ENCODE measurements at regions of chr1 and their contacts with region 1.

Region 1: GRCh38 chr1:173297798-173298391 is 90.8 kb upstream of the TNFSF4 start:
- DNase-seq: peak; percentile 15
- H3K4me3 Mint-ChIP-seq: peak overlapping the region; percentile 16
- H3K27ac Mint-ChIP-seq: peak overlapping the region; percentile 37
- H3K4me1 Mint-ChIP-seq: peaks cover 24% of the 10 kb centered on the region
- H3K27me3 Mint-ChIP-seq: peaks cover 8% of the 10 kb centered on the region

Region 2: GRCh38 chr1:171744986-171745385 is 1552.9 kb before region 1 on chr1:
- intact Hi-C with region 1: no loop called
- DNase-seq: no peak
- H3K4me3 Mint-ChIP-seq: no peak overlapping the region
- H3K27ac Mint-ChIP-seq: no peak overlapping the region
- H3K4me1 Mint-ChIP-seq: peaks cover 34% of the 10 kb centered on the region
- H3K27me3 Mint-ChIP-seq: no peaks in the 10 kb centered on the region

Region 3: GRCh38 chr1:172638885-172639831 is 658.7 kb before region 1 on chr1:
- intact Hi-C with region 1: loop called (anchors 5 kb)
- DNase-seq: peak; percentile 77
- H3K4me3 Mint-ChIP-seq: peak overlapping the region; percentile 62
- H3K27ac Mint-ChIP-seq: peak overlapping the region; percentile 99
- H3K4me1 Mint-ChIP-seq: peaks cover 75% of the 10 kb centered on the region
- H3K27me3 Mint-ChIP-seq: peaks cover 5% of the 10 kb centered on the region

Region 4: DNA sequence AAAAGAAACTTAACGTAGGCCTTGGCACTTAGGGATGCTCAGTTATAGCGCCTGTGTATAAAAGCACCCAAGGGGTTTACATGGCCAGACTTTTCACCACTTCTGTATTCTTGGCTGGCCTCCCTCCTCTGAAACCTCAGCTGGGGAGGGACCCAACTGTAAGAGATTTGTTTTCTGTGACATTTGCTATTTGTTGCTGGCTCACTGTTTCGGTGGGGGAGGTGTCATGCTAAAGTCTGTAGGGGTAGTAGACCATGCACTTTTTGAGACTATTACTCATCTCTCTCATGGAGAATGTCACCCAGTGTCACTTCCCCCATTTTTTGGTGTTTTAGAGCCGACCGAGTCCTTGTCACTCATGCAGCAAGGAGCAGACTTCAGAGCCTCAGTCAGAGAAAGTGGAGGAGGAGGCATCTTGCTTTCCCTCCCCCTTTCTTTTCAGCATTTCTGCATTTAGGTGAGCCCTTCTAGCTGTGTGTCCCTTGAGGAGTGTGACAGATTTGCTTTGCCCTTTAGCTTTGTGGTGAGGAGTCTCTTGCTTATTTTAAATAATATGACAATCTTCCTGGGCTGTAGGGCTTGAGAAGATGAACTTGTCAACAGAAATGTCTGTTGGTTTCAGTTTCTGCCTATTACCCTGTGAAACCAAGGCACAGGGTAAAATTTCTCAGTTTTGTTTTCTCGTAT is 478.9 kb before region 1 on chr1:
- intact Hi-C with region 1: loop called (anchors 2 kb)
- DNase-seq: peak; percentile 37
- H3K4me3 Mint-ChIP-seq: peak overlapping the region; percentile 59
- H3K27ac Mint-ChIP-seq: peak overlapping the region; percentile 78
- H3K4me1 Mint-ChIP-seq: peaks cover 47% of the 10 kb centered on the region
- H3K27me3 Mint-ChIP-seq: peaks cover 5% of the 10 kb centered on the region

Region 5: DNA sequence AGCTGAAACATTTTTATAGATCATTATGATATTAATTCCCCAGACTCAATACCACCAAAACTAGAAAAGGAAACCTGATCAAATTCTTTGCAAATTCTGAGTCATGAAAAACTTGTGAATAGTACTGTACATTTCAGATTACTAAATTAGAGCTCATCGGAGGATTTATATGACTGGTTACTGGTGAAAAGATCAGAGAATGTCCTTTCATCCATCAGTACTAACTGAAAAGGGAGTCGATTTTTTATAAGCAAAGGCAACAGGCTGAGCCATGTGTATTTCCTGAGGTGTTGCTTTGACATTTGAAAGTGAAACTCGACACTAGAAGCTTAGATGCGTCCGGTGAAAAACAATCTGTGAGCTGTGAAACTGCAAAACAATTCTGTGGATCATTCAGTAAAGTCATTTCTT is 402.8 kb before region 1 on chr1:
- intact Hi-C with region 1: loop called (anchors 2 kb)
- DNase-seq: peak; percentile 34
- H3K4me3 Mint-ChIP-seq: peak overlapping the region; percentile 28
- H3K27ac Mint-ChIP-seq: peak overlapping the region; percentile 7
- H3K4me1 Mint-ChIP-seq: peaks cover 42% of the 10 kb centered on the region
- H3K27me3 Mint-ChIP-seq: peaks cover 13% of the 10 kb centered on the region

Region 6: DNA sequence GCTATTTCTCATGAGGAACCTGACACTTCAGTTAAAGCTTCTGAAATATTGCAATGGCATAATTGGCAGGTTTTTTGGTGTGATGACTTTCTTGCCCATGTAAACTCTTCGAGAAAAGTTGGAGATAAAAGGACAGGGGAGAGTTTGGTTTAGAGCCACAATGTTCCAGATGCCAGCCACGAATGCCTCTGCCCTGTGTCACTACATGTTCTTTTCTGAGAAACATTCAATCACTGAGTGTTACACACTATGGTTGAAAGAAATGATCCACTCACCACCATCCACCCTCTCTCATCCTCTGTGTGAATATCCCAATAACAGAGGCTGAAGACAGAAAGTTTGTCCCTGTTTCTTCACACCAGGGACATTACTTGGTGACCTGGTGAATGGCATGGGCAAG is 157.2 kb before region 1 on chr1:
- intact Hi-C with region 1: no loop called
- DNase-seq: no peak
- H3K4me3 Mint-ChIP-seq: no peak overlapping the region
- H3K27ac Mint-ChIP-seq: no peak overlapping the region
- H3K4me1 Mint-ChIP-seq: no peaks in the 10 kb centered on the region
- H3K27me3 Mint-ChIP-seq: peaks cover 5% of the 10 kb centered on the region

Region 7: GRCh38 chr1:173409613-173410012 is 111.7 kb after region 1 on chr1:
- intact Hi-C with region 1: loop called (anchors 5 kb)
- DNase-seq: no peak
- H3K4me3 Mint-ChIP-seq: no peak overlapping the region
- H3K27ac Mint-ChIP-seq: no peak overlapping the region
- H3K4me1 Mint-ChIP-seq: peaks cover 19% of the 10 kb centered on the region
- H3K27me3 Mint-ChIP-seq: peaks cover 4% of the 10 kb centered on the region

Region 8: DNA sequence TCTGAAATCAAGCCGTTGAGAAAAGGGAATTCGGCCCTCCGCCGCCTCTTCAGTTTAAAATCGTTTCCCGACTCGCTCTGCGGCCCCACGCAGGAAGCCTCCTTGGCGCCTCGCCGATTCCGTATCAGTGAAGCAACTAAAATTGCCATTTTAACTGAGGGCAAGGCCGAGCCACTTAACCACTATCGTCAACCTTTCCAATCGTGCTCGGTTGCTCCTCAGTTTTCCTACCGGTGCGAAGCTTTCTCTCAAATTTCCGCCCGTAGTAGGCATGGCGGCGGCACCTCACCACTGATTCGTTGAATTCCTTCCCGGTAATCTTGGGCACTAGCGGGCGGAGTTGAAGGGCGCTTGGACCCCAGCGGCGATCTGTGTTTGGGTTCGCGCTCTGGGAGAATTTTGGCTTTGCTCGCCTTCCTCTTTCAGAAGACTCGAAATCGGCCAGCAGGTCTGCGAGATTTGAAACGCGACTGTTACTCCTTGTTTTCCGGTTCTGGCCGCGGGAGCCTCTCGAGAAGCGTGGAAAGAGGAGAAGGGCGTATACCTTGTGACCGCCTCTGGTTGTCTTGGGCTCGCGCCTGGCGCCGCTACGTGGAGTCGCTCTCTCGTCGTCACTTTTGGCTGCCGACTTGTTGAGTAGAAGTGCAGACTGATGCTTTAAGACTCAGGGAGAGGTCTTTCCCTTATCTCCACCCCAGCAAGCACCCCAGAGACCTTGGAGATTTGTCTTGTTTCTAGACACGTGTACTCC is 526.6 kb after region 1 on chr1 and contains the starts of genes CENPL and DARS2:
- intact Hi-C with region 1: loop called (anchors 5 kb)
- DNase-seq: peak; percentile 90
- H3K4me3 Mint-ChIP-seq: peak within 1 kb of the TSS; percentile 91
- H3K27ac Mint-ChIP-seq: peak within 1 kb of the TSS; percentile 95
- H3K4me1 Mint-ChIP-seq: peaks cover 48% of the 10 kb centered on the region
- H3K27me3 Mint-ChIP-seq: no peaks in the 10 kb centered on the region
- total RNA-seq, gene CENPL: 23.6 and 25.7 TPM in 2 replicates
- total RNA-seq, gene DARS2: 41.9 TPM in 2 replicates